Activated CD4-positive, alpha-beta memory T cell treated with anti-CD3 and anti-CD28 coated beads for 36 hours (primary cell): ENCODE measurements at regions of chr5 and their contacts with region 1.

Region 1: GRCh38 chr5:160508780-160509361 is 87.2 kb downstream of the PTTG1 start:
- DNase-seq: peak; percentile 76
- H3K4me3 Mint-ChIP-seq: peak overlapping the region; percentile 34
- H3K27ac Mint-ChIP-seq: peak overlapping the region; percentile 75
- H3K4me1 Mint-ChIP-seq: peaks cover 40% of the 10 kb centered on the region
- H3K27me3 Mint-ChIP-seq: no peaks in the 10 kb centered on the region

Region 2: DNA sequence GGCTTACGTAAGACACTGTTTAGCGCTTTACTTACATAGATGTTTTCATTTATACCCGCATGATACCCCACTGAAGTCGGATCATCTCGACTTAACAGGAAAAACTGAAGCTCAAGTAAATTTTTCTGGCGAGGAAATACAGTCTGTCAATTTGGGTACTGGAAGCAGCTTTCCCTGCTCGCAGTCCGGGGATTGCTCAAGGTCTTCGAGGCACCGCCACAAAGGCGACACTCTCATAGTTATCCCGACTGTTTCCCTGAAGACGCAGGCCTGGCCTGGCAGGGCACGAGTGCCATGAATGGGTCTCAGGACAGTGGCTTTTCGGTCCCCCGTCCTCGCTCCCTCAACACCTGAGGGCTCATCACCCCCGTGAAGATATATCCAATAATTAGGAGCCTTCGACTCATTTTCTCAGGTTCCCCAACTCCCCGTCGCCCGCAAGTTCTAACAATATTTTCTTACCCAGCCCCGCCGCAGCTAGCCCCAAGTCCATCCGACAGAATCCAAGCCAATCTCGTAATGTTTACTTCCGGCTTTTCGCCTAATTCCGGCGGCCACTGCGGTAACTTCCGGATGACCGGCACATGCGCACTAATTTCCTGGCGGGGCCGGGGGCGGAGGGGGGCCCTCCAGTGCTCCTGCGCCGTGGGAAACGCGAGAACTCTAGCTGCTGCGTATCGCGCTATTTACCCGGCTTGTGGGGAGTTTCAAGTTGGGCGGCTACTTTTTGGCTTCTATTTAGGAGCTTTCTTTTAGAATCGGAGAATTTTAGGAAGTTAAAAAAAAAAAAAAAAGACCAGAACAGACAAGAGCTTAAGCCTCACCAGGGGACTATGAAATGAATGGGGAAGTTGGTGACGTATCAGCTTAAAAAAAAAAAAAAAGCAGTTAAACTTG is 90.1 kb before region 1 on chr5 and contains the start of gene SLU7:
- CTCF ChIA-PET with region 1: interaction called, 6 read pairs
- POLR2A ChIA-PET with region 1: no interaction called
- intact Hi-C with region 1: loop called (anchors 1 kb)
- DNase-seq: peak; percentile 97
- H3K4me3 Mint-ChIP-seq: peak within 1 kb of the TSS; percentile 98
- H3K27ac Mint-ChIP-seq: peak within 1 kb of the TSS; percentile 93
- H3K4me1 Mint-ChIP-seq: peaks cover 52% of the 10 kb centered on the region
- H3K27me3 Mint-ChIP-seq: no peaks in the 10 kb centered on the region
- total RNA-seq, gene SLU7: 45.9 to 46.4 TPM

Region 3: GRCh38 chr5:160479926-160480325 is 28.9 kb before region 1 on chr5:
- CTCF ChIA-PET with region 1: interaction called, 5 read pairs
- POLR2A ChIA-PET with region 1: interaction called, 6 read pairs
- intact Hi-C with region 1: loop called (anchors 2 kb)
- DNase-seq: no peak
- H3K4me3 Mint-ChIP-seq: peak overlapping the region; percentile 30
- H3K27ac Mint-ChIP-seq: peak overlapping the region; percentile 79
- H3K4me1 Mint-ChIP-seq: peaks cover 75% of the 10 kb centered on the region
- H3K27me3 Mint-ChIP-seq: no peaks in the 10 kb centered on the region

Region 4: GRCh38 chr5:160657068-160657507 is 148.2 kb after region 1 on chr5:
- CTCF ChIA-PET with region 1: no interaction called
- POLR2A ChIA-PET with region 1: no interaction called
- intact Hi-C with region 1: loop called (anchors 10 kb)
- DNase-seq: no peak
- H3K4me3 Mint-ChIP-seq: no peak overlapping the region
- H3K27ac Mint-ChIP-seq: no peak overlapping the region
- H3K4me1 Mint-ChIP-seq: no peaks in the 10 kb centered on the region
- H3K27me3 Mint-ChIP-seq: peaks cover 12% of the 10 kb centered on the region

Region 5: GRCh38 chr5:160787240-160787639 is 278.4 kb after region 1 on chr5:
- CTCF ChIA-PET with region 1: interaction called, 6 read pairs
- POLR2A ChIA-PET with region 1: no interaction called
- intact Hi-C with region 1: loop called (anchors 1 kb)
- DNase-seq: peak; percentile 36
- H3K4me3 Mint-ChIP-seq: no peak overlapping the region
- H3K27ac Mint-ChIP-seq: no peak overlapping the region
- H3K4me1 Mint-ChIP-seq: no peaks in the 10 kb centered on the region
- H3K27me3 Mint-ChIP-seq: peaks cover 3% of the 10 kb centered on the region

Region 6: DNA sequence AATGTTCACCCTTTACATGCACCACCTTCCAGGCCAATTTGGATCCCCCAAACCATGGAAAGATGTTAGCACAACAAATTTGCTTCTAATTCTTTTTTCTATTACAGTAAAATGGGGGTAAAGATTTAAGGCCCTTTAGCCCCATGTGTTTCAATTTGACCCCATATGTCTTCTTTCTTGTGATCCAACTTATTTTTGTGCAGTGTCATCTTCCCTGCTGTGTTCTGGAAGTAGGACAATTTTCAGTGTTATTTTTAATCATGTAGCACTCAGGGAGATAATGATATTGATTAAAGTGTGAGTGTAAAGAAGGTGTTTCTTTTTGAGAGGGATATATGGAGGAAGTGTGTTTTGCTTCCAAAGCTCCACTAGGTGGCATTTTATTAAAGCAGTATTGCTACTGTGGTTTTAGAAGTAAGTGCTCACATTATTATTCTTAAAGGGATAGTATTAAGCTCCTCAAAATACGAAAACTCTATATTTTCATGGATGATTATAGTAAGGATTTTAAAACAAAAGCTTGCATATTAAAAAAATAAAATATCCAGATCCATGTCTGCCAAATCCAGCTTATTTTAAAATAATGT is 461.8 kb after region 1 on chr5:
- CTCF ChIA-PET with region 1: no interaction called
- POLR2A ChIA-PET with region 1: interaction called, 4 read pairs
- intact Hi-C with region 1: loop called (anchors 10 kb)
- DNase-seq: no peak
- H3K4me3 Mint-ChIP-seq: no peak overlapping the region
- H3K27ac Mint-ChIP-seq: no peak overlapping the region
- H3K4me1 Mint-ChIP-seq: no peaks in the 10 kb centered on the region
- H3K27me3 Mint-ChIP-seq: peaks cover 14% of the 10 kb centered on the region